Testis (tissue), 5 donors: ENCODE measurements at regions of chr11 and their contacts with region 1.

Region 1: GRCh38 chr11:63945477-63946163 is 6.8 kb downstream of the NAA40 start:
- DNase-seq: peak; percentile 85
- H3K4me3 ChIP-seq: no peak overlapping the region
- H3K27ac ChIP-seq: peak overlapping the region; percentile 64 to 78
- H3K4me1 ChIP-seq: peaks cover 18% of the 10 kb centered on the region
- H3K27me3 ChIP-seq: no peaks in the 10 kb centered on the region
- CTCF ChIP-seq: peak; percentile 71 to 88 (median 85)
- POLR2A ChIP-seq: no peak

Region 2: DNA sequence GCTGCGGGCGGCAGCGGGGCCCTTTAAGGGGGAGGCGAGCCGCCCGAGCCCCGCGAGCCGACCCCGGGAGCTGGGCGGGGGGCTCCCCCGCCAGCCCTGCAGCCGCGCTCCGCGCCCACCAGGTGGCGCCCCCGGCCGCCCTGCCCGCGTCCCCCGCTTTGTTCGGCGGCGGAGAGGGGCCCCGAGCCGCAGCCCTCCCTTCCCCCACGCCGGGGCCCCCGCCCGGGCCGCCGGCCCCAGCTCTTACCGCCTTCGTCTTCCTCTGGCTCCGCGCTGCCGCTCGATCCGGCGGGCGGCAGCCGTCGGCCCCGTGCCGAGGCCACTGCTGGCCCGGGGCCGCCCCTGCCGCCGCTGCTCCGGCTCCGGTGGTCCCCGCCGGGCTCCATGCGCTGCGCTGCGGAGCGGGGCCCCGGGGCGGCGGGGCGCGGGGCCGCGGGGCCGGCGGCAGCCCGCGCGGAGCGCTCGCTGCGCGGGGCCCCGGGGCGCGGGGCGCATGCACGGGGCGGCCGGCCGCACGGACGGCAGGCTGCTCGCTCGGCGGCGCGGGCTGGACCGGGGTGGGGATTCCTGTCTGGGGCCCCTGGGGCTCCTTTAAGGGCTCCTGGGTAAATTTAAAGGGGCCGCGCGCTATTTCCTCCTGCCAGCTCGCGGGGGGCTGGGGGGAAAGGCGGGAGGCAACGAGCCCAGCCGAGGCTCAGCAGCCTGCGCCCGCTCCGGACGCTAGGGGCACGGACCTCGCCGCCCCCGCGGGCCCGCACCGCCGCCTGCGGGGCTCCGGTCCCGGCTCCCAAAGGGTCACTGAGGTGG is 177.2 kb before region 1 on chr11 and contains the start of gene ZFTA:
- intact Hi-C with region 1: loop called (anchors 10 kb)
- DNase-seq: peak; percentile 86
- H3K4me3 ChIP-seq: peak within 1 kb of the TSS; percentile 78 to 82
- H3K27ac ChIP-seq: peak within 1 kb of the TSS; percentile 76 to 83
- H3K4me1 ChIP-seq: peaks cover 32% of the 10 kb centered on the region
- H3K27me3 ChIP-seq: no peaks in the 10 kb centered on the region
- CTCF ChIP-seq: peak; percentile 66 to 92 (median 70)
- POLR2A ChIP-seq: no peak
- total RNA-seq, gene ZFTA: 19.5 to 31.0 TPM

Region 3: GRCh38 chr11:63838678-63839507 is 106.7 kb before region 1 on chr11 and contains the start of gene MARK2:
- intact Hi-C with region 1: loop called (anchors 5 kb)
- DNase-seq: peak; percentile 99
- H3K4me3 ChIP-seq: peak within 1 kb of the TSS; percentile 90 to 92
- H3K27ac ChIP-seq: peak within 1 kb of the TSS; percentile 86 to 92
- H3K4me1 ChIP-seq: peaks cover 23% of the 10 kb centered on the region
- H3K27me3 ChIP-seq: no peaks in the 10 kb centered on the region
- CTCF ChIP-seq: no peak
- POLR2A ChIP-seq: peak; percentile 44
- total RNA-seq, gene MARK2: 51.7 to 52.8 TPM

Region 4: DNA sequence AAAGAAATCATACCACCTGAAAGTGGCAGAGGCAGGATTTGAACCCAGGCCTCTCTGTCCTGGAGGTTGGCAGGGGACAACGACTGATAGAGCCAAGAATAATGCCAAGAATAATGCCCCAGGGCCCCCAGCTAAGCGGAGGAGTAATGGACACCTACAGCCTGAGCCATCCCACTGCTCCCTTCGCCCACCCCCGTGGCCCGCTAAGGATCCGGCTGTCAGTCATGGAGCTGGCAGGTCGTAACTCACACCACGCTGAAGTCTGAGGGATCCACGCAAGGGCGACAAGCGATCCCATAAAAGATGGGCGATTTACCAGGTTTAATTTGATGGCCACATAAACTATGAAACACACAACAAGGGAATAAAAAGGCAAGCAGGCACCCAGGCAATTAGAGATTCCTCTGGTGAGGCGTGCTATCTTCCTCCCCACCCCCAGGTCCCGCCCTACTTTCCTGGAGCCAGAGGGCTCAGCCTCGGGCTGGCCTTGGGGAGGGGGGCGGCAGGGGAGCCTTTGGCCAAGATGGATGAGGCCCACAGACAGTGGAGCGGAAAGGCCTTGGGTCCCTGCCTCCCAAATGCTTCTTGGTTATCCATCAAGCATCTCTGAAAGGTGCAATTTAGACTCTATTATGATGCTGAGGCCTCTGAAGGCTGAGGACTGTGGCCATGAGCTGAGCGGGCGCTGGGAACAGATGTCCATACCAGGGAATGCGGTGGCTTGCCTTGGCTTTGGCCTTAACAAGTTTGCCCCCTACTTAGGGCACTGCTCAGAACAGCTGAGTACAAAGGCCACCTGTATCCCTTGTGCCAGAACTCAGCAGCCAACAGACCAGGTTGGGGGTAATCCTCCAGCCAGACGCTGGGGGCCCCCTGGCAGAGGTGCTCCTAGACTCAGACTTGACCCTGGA is 165.1 kb after region 1 on chr11:
- intact Hi-C with region 1: no loop called
- DNase-seq: no peak
- H3K4me3 ChIP-seq: no peak overlapping the region
- H3K27ac ChIP-seq: no peak overlapping the region
- H3K4me1 ChIP-seq: no peaks in the 10 kb centered on the region
- H3K27me3 ChIP-seq: no peaks in the 10 kb centered on the region
- CTCF ChIP-seq: no peak
- POLR2A ChIP-seq: no peak

Region 5: GRCh38 chr11:64334846-64335735 is 389.5 kb after region 1 on chr11:
- intact Hi-C with region 1: no loop called
- DNase-seq: no peak
- H3K4me3 ChIP-seq: no peak overlapping the region
- H3K27ac ChIP-seq: no peak overlapping the region
- H3K4me1 ChIP-seq: peaks cover 5% of the 10 kb centered on the region
- H3K27me3 ChIP-seq: no peaks in the 10 kb centered on the region
- CTCF ChIP-seq: no peak
- POLR2A ChIP-seq: no peak